H1 (cell line): ENCODE measurements at regions of chr6 and their contacts with region 1.

Region 1: GRCh38 chr6:56524891-56525703 is 117.6 kb downstream of the DST start:
- DNase-seq: no peak
- H3K4me3 ChIP-seq: no peak overlapping the region
- H3K27ac ChIP-seq: no peak overlapping the region
- H3K4me1 ChIP-seq: peaks cover 4 to 26% (median 10%) of the 10 kb centered on the region in 4 experiments; a peak in 5 of 7 replicates
- H3K27me3 ChIP-seq: no peaks in the 10 kb centered on the region
- CTCF ChIP-seq: no peak
- EP300 ChIP-seq: no peak
- POLR2A ChIP-seq: no peak
- RAD21 ChIP-seq: no peak

Region 2: DNA sequence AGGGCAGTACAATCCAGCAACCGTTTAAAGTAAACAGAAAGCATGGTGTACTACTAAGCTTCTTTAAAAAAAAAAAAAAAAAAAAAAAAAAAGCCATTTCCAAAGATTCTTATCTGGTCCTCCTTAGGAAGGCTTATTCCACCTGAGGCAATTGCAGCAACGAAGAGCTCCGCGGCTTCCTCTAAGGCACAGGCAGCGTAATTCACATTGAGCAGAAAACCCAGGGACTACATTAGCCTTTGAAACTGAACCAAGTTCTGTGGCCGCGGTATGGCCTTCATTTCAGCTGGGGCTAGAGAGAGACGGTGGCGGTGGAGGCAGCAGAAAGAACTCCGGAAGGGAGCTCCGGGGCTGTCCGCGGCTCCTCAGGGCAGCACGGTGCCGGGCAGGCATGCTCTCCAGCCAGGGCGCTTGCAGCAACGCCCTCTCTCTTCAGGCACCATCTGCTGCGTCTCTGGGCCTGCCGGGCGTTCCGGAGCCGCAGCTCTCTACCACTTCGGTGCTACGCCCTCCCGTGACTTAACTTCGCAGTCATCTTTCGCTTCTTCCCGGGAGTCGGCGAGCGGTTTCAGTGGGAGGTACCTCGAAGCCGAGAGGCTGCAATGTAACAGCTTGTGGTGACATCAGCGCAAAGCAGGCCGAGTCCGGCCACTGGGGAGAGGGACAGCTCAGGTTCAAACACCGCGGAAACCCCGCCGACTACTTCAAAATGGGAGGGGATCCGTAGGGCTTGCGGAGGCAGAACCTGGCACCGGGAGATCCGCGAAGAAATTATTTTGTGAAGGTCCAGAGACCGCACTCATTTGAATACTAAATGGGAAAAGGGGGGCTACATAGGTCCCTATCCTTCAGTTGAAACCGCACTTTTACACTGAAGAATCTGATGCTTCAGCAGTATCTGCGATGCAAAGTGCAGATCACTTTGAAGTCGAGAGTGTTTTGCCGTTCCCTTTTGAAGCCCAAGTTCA is 17.6 kb after region 1 on chr6:
- CTCF ChIA-PET with region 1: interaction called, 6 read pairs
- POLR2A ChIA-PET with region 1: interaction called, 10 read pairs
- DNase-seq: peak; percentile 84 to 90
- H3K4me3 ChIP-seq: peak overlapping the region; percentile 39 to 73 (median 70)
- H3K27ac ChIP-seq: peak overlapping the region; percentile 70; the same call in 1 of the 2 replicates
- H3K4me1 ChIP-seq: peaks cover 0 to 6% (median 2%) of the 10 kb centered on the region in 4 experiments; a peak in 4 of 7 replicates
- H3K27me3 ChIP-seq: no peaks in the 10 kb centered on the region
- CTCF ChIP-seq: peak in 1 of 3 experiments; percentile 25; a peak in 1 of 4 replicates
- EP300 ChIP-seq: peak in 1 of 2 experiments; percentile 66; a peak in 1 of 3 replicates
- POLR2A ChIP-seq: peak; percentile 61 to 80
- RAD21 ChIP-seq: peak; percentile 13 to 32; a peak in 2 of 4 replicates